B cell (primary cell): ENCODE measurements at regions of chr17 and their contacts with region 1.

Region 1: GRCh38 chr17:41966463-41967140 is at the start of gene CNP:
- DNase-seq: peak; percentile 94
- ATAC-seq: peak; percentile 85
- H3K4me3 ChIP-seq: peak within 1 kb of the TSS; percentile 65 to 91 (median 82)
- H3K4me3 Mint-ChIP-seq: peak within 1 kb of the TSS; percentile 85
- H3K27ac ChIP-seq: peak within 1 kb of the TSS; percentile 67 to 75
- H3K27ac Mint-ChIP-seq: peak within 1 kb of the TSS; percentile 86
- H3K4me1 ChIP-seq: peaks cover 16 to 38% of the 10 kb centered on the region in 2 donors
- H3K4me1 Mint-ChIP-seq: peaks cover 37% of the 10 kb centered on the region
- H3K27me3 ChIP-seq: no peaks in the 10 kb centered on the region
- H3K27me3 Mint-ChIP-seq: no peaks in the 10 kb centered on the region
- CTCF ChIP-seq: no peak
- total RNA-seq, gene CNP: 45.2 and 59.0 TPM in 2 replicates

Region 2: GRCh38 chr17:41918314-41919164 is 48.1 kb before region 1 on chr17 and contains the start of gene ACLY:
- CTCF ChIA-PET with region 1: no interaction called
- POLR2A ChIA-PET with region 1: no interaction called
- intact Hi-C with region 1: loop called (anchors 1 kb)
- DNase-seq: peak; percentile 95
- ATAC-seq: peak; percentile 99
- H3K4me3 ChIP-seq: peak within 1 kb of the TSS; percentile 78 to 99 (median 98)
- H3K4me3 Mint-ChIP-seq: peak within 1 kb of the TSS; percentile 91
- H3K27ac ChIP-seq: peak within 1 kb of the TSS; percentile 62 to 81
- H3K27ac Mint-ChIP-seq: peak within 1 kb of the TSS; percentile 89
- H3K4me1 ChIP-seq: peaks cover 15 to 21% of the 10 kb centered on the region in 2 donors
- H3K4me1 Mint-ChIP-seq: peaks cover 40% of the 10 kb centered on the region
- H3K27me3 ChIP-seq: no peaks in the 10 kb centered on the region
- H3K27me3 Mint-ChIP-seq: no peaks in the 10 kb centered on the region
- CTCF ChIP-seq: no peak
- total RNA-seq, gene ACLY: 85.3 and 91.5 TPM in 2 replicates

Region 3: DNA sequence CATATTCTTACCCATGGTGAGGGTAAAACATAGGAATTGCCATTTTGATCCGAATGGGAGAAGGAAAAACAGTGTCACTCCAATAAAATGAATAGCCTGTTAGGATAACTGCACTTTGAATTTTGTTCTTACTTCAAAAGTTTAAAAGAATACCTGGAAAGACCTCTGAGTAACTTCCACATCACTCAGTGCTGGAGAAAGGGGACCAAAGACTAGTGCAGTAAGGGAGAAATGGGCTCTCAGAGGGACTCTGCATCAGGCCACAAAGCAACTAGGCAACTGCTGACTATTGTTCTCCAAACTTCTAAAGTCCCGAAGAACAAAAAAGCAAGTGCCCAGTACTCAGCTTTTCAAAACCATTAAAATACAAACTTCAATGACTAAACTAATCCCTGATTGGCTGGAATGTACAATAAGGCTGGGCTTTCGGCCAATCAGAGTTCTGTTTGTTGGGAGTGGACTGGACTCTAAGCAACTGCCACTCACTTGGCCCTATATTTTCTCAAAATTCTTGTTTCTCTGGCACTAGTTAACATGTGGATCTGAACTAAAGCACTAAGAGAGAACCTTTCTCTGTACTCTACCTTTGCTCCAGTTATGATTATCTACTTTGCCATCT is 44.4 kb after region 1 on chr17:
- CTCF ChIA-PET with region 1: interaction called, 90 read pairs
- POLR2A ChIA-PET with region 1: interaction called, 32 read pairs
- intact Hi-C with region 1: no loop called
- DNase-seq: no peak
- ATAC-seq: no peak
- H3K4me3 ChIP-seq: no peak overlapping the region
- H3K4me3 Mint-ChIP-seq: no peak overlapping the region
- H3K27ac ChIP-seq: peak overlapping the region in 1 of 2 donors; percentile 11
- H3K27ac Mint-ChIP-seq: peak overlapping the region; percentile 32
- H3K4me1 ChIP-seq: peaks cover 10 to 21% of the 10 kb centered on the region in 2 donors
- H3K4me1 Mint-ChIP-seq: peaks cover 50% of the 10 kb centered on the region
- H3K27me3 ChIP-seq: no peaks in the 10 kb centered on the region
- H3K27me3 Mint-ChIP-seq: no peaks in the 10 kb centered on the region
- CTCF ChIP-seq: no peak

Region 4: DNA sequence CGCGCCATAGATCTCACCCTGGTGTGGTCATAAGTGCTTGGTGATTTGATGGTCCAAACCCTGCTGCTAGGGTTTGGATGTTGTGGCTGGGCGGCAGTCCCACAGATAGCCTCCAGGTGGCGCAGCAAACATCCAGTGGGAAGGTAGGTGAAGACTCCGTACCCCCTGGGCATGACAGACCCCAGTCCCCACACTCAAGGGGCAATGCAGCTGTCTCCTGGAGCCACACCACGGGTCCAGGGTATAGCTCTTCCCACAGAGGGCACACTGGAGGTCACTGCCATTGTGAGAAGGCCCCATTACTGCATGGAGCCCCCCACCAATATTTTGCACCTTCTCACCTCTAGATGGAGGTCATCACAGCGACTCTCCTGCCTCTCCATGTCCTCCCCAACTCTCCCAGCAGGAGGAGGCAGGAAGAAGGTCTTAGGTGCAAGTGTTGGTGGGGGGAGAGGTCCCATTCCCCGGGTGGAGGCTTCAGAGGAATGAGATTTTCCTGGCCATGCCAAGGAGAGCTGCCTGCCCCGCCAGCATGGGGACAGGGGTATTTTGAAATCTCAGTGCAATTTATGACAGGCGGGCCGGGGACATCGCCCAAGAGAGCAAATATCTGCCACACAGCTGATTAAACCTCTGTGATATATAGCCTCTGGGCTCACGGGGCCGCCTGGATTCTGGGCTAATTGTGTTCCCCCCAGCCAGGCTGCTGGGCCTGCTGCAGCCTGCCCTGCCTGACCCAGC is 100.9 kb after region 1 on chr17:
- CTCF ChIA-PET with region 1: interaction called, 51 read pairs
- POLR2A ChIA-PET with region 1: no interaction called
- intact Hi-C with region 1: loop called (anchors 1 kb)
- DNase-seq: peak; percentile 79
- ATAC-seq: peak; percentile 71
- H3K4me3 ChIP-seq: no peak overlapping the region
- H3K4me3 Mint-ChIP-seq: no peak overlapping the region
- H3K27ac ChIP-seq: no peak overlapping the region
- H3K27ac Mint-ChIP-seq: no peak overlapping the region
- H3K4me1 ChIP-seq: peaks cover 29 to 30% of the 10 kb centered on the region in 2 donors
- H3K4me1 Mint-ChIP-seq: peaks cover 24% of the 10 kb centered on the region
- H3K27me3 ChIP-seq: peaks cover 0 to 18% (median 7%) of the 10 kb centered on the region in 4 experiments
- H3K27me3 Mint-ChIP-seq: peaks cover 3% of the 10 kb centered on the region
- CTCF ChIP-seq: peak; percentile 91

Region 5: DNA sequence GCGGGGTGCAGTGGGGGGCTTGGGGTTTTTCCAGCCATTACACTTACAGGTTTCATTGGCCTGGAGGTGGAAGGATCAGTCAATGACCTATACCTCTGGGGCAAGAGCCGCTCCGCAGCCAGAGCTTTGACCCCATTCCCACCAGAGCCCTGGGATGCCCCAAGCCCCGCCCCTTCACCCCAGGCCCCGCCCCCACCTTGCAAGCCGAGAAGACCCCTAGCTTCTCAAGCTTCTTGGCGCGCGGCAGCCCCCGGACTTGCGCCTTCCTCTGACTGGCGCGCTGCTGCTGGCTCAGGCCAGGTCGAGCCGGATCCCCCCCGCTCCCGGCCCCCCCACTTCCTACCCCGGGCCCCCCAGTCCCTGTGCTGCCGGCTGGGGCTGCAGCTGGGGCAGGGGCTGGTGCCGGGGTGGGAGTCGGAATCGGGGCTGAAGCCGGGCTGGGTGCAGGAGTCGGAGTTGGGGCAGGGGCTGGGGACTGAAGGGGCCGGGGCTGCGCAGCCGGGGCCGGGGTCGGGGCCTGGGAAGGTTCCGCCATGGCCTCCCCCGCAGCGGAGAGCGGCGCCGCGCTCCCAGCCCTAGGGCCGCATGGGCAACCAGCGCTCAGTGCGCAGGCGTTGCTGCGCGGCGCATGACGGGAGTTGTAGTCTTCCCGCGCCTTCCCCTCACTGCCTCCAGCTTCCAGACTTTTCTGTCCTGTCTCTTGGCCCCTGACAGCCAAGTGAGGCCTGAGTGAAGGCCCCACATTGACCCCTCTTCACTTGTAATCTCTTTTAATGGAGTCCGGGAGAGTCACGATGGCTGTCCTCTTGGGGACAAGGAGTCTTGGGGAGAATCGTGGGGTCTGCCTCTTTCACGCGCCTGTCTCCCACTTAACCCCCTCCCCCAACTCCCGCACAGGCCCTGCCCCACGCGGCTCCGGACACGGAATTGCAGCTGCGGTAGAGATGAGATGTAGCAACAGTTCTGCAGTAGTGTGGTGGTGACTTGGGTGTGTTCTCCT is 154.5 kb after region 1 on chr17 and contains the start of gene KAT2A:
- CTCF ChIA-PET with region 1: interaction called, 115 read pairs
- POLR2A ChIA-PET with region 1: interaction called, 6 read pairs
- intact Hi-C with region 1: loop called (anchors 1 kb)
- DNase-seq: peak; percentile 82
- ATAC-seq: peak; percentile 89
- H3K4me3 ChIP-seq: peak within 1 kb of the TSS in 4 of 5 experiments; percentile 40 to 79 (median 58)
- H3K4me3 Mint-ChIP-seq: peak within 1 kb of the TSS; percentile 72
- H3K27ac ChIP-seq: no peak within 1 kb of the TSS
- H3K27ac Mint-ChIP-seq: peak within 1 kb of the TSS; percentile 59
- H3K4me1 ChIP-seq: peaks cover 14 to 26% of the 10 kb centered on the region in 2 donors
- H3K4me1 Mint-ChIP-seq: peaks cover 28% of the 10 kb centered on the region
- H3K27me3 ChIP-seq: no peaks in the 10 kb centered on the region
- H3K27me3 Mint-ChIP-seq: no peaks in the 10 kb centered on the region
- CTCF ChIP-seq: no peak
- total RNA-seq, gene KAT2A: 61.6 and 66.3 TPM in 2 replicates

Region 6: DNA sequence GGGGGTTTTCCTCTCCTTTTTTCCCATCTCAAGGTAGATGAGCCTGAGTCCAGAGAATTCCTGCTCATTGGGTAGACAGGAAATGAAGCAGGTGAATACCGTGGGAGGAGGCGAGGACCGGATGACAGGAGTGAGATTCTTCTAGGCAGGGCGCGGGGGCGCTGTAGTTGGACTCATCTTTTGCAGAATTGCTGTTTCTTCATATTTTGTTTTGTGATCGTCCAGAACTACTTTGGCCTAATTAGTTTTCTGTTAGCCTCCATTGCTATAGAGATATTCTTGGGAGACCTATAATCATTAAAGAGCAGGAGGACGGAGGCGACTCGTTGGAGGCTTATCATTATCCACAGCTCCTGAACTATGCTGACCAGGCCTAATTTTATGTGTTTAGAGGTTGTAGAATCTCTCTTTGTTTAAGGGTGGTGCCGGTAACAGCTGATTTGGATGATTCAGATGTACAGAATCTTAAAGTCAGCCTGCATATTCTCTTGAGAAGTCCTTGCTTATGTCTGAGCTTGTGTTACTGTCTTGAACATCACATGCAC is 492.7 kb after region 1 on chr17:
- CTCF ChIA-PET with region 1: no interaction called
- POLR2A ChIA-PET with region 1: no interaction called
- intact Hi-C with region 1: no loop called
- DNase-seq: peak; percentile 44
- ATAC-seq: no peak
- H3K4me3 ChIP-seq: peak overlapping the region; percentile 67 to 97 (median 95)
- H3K4me3 Mint-ChIP-seq: peak overlapping the region; percentile 97
- H3K27ac ChIP-seq: peak overlapping the region; percentile 78 to 84
- H3K27ac Mint-ChIP-seq: peak overlapping the region; percentile 93
- H3K4me1 ChIP-seq: peaks cover 52 to 61% of the 10 kb centered on the region in 2 donors
- H3K4me1 Mint-ChIP-seq: peaks cover 59% of the 10 kb centered on the region
- H3K27me3 ChIP-seq: no peaks in the 10 kb centered on the region
- H3K27me3 Mint-ChIP-seq: no peaks in the 10 kb centered on the region
- CTCF ChIP-seq: peak; percentile 6